Heart right ventricle (tissue), 16 donors: ENCODE measurements at regions of chr1 and their contacts with region 1.

Region 1: GRCh38 chr1:37602750-37603694 is 7.3 kb upstream of the GNL2 start:
- DNase-seq: peak in 1 of 2 donors; percentile 7
- ATAC-seq: peak in 3 of 8 donors; percentile 44 to 56 (median 56)
- H3K4me3 ChIP-seq: no peak overlapping the region
- H3K27ac ChIP-seq: no peak overlapping the region
- H3K4me1 ChIP-seq: peaks cover 0 to 7% (median 0%) of the 10 kb centered on the region in 9 donors
- H3K27me3 ChIP-seq: peaks cover 0 to 50% (median 13%) of the 10 kb centered on the region in 7 donors
- CTCF ChIP-seq: peak in 8 of 9 donors; percentile 16 to 71 (median 62)

Region 2: GRCh38 chr1:37673920-37674319 is 70.9 kb after region 1 on chr1:
- intact Hi-C with region 1: loop called in 1 of 10 experiments (anchors 5 kb)
- DNase-seq: no peak
- ATAC-seq: no peak
- H3K4me3 ChIP-seq: no peak overlapping the region
- H3K27ac ChIP-seq: no peak overlapping the region
- H3K4me1 ChIP-seq: no peaks in the 10 kb centered on the region
- H3K27me3 ChIP-seq: peaks cover 0 to 48% (median 37%) of the 10 kb centered on the region in 7 donors
- CTCF ChIP-seq: no peak